PC-9 (cell line): ENCODE measurements at regions of chr2 and their contacts with region 1.

Region 1: DNA sequence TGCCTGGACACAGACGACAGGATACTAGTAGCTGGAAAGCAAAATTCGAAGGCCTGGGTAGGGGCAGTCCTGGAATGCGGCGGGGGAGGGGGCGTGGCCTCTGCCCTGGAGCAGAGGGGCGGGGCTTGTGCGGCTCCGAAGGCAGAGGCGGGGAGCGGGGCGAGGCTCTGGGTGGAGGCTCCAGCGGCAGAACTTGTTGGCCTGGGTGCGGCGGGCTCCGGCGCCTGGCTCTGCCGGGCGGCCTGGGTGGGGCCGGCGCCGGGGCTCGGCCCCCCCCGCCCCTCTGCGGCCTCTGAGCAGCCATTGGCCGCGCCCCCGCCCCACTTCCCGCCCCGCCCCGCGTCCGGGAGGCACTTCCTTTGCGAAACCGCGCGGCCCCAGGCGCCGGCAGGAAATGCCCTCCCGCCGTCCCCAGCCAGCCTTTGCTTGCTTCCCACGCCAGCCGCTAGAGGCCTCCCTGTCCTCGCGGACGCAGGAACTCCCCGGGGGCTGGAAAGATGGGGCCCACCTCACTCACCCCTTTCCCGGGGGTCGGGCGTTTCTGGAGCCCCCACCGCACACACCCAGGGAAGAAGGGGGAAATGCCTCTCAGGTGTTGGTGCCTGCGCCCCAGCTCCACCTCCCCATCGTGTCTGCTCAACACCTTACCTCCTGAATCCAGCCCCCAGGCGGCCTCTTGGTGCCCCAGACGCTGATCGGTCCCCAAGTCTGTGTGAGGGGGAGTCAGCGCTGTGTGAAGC is 6.7 kb downstream of the CTDSP1 start:
- DNase-seq: peak; percentile 78 to 97
- H3K4me3 ChIP-seq: peak overlapping the region; percentile 63; the same call in 1 of the 2 replicates
- H3K27ac ChIP-seq: peak overlapping the region; percentile 58
- H3K4me1 ChIP-seq: peaks cover 17% of the 10 kb centered on the region
- H3K27me3 ChIP-seq: no peaks in the 10 kb centered on the region
- CTCF ChIP-seq: peak; percentile 76

Region 2: DNA sequence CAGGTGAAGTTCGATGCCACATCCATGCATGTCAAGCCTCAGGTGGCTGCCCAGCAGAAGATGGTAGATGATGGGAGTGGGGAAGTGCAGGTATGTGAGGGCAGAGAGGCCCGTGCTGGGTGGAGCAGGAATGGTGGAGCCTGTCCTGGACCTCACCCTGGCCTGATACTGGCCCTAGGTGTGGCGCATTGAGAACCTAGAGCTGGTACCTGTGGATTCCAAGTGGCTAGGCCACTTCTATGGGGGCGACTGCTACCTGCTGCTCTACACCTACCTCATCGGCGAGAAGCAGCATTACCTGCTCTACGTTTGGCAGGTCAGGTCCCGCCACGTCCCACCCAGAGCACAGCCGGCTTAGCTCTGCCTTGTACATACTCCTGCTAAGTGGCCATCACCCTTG is 25.5 kb after region 1 on chr2:
- CTCF ChIA-PET with region 1: interaction called, 12 read pairs
- POLR2A ChIA-PET with region 1: no interaction called
- intact Hi-C with region 1: no loop called
- DNase-seq: no peak
- H3K4me3 ChIP-seq: no peak overlapping the region
- H3K27ac ChIP-seq: no peak overlapping the region
- H3K4me1 ChIP-seq: no peaks in the 10 kb centered on the region
- H3K27me3 ChIP-seq: 0 out of 2 replicates have a peak, but pooled peaks cover 5% of the 10 kb centered on the region
- CTCF ChIP-seq: no peak

Region 3: DNA sequence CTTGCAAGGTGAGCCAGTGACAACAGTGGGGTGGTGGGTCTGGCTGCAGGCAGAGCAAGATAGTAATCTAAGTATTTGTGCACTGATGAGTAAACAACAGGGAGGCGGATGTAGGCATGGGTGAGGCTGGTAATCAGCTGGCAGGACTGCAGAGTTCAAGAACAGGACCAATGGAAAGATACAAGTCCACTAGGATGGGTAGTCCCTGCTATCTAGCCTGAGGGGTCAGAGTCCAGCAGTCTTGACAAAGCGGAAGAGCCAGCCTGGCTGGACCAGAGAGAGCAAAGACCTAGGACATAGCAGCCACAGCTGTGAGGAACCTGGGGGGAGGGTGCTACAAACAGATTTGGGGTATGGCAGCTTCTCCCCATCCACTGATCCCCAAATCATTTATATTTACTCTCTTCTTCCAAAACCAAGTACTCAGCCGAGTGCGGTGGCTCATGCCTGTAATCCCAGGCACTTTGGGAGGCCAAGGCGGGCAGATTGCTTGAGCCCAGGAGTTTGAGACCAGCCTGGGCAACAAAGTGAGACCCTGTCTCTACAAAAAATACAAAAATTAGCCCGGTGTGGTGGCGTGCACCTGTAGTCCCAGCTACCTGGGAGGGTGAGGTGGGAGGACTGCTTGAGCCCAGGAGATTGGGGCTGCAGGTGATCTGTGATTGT is 38.4 kb after region 1 on chr2:
- CTCF ChIA-PET with region 1: no interaction called
- POLR2A ChIA-PET with region 1: interaction called, 4 read pairs
- intact Hi-C with region 1: loop called (anchors 2 kb)
- DNase-seq: peak; percentile 66 to 88
- H3K4me3 ChIP-seq: no peak overlapping the region
- H3K27ac ChIP-seq: no peak overlapping the region
- H3K4me1 ChIP-seq: peaks cover 50% of the 10 kb centered on the region
- H3K27me3 ChIP-seq: no peaks in the 10 kb centered on the region
- CTCF ChIP-seq: no peak

Region 4: GRCh38 chr2:218466016-218466521 is 59.7 kb after region 1 on chr2:
- CTCF ChIA-PET with region 1: interaction called, 4 read pairs
- POLR2A ChIA-PET with region 1: no interaction called
- intact Hi-C with region 1: loop called (anchors 1 kb)
- DNase-seq: no peak
- H3K4me3 ChIP-seq: no peak overlapping the region
- H3K27ac ChIP-seq: no peak overlapping the region
- H3K4me1 ChIP-seq: no peaks in the 10 kb centered on the region
- H3K27me3 ChIP-seq: no peaks in the 10 kb centered on the region
- CTCF ChIP-seq: peak; percentile 77

Region 5: DNA sequence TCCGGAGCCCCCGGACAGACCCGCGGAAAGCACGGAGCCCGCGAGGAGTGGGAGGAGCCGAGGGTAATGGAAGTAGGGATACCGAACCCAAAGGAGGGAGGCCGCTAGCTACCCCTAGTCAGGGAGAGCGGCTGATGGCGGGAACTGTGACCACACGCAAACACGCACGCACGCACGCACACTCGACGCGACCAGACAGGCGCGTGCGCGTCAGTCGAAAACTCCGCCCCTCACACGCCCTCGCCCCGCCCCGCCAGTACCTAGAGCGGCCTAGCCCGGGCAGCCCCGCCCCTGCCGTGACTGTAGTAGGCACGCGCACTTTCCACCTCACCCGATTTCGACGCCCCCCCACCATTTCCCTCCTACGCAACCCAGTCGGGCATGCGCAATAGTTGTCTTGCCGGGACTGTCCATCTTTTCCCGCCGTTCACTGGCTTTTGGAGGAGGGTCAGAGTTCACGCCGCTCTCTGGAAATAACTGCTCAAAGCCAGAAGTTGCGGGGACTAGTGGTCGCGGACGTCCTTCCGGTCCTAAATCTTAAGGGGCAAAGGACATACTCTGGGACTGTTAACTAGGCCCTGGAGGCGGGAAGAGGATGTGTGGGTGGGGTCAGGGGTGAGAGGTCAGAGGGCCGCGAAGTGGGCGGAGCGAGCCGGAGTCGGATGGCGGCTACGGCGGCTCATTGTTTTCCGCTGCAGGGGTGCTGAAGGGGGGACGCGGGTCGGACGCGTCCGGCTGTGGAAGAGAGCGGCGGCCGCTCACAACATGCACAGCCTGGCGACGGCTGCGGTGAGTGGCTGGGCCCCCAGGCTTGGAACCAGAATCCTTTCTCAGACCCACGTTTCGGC is 162.0 kb after region 1 on chr2 and contains the starts of genes CNOT9 and USP37:
- CTCF ChIA-PET with region 1: no interaction called
- POLR2A ChIA-PET with region 1: no interaction called
- intact Hi-C with region 1: loop called (anchors 1 kb)
- DNase-seq: peak; percentile 91 to 99
- H3K4me3 ChIP-seq: peak within 1 kb of the TSS; percentile 90
- H3K27ac ChIP-seq: peak within 1 kb of the TSS; percentile 81
- H3K4me1 ChIP-seq: peaks cover 29% of the 10 kb centered on the region
- H3K27me3 ChIP-seq: no peaks in the 10 kb centered on the region
- CTCF ChIP-seq: no peak
- total RNA-seq, gene CNOT9: 45.8 and 46.0 TPM in 2 replicates
- total RNA-seq, gene USP37: 13.1 and 15.4 TPM in 2 replicates

Region 6: DNA sequence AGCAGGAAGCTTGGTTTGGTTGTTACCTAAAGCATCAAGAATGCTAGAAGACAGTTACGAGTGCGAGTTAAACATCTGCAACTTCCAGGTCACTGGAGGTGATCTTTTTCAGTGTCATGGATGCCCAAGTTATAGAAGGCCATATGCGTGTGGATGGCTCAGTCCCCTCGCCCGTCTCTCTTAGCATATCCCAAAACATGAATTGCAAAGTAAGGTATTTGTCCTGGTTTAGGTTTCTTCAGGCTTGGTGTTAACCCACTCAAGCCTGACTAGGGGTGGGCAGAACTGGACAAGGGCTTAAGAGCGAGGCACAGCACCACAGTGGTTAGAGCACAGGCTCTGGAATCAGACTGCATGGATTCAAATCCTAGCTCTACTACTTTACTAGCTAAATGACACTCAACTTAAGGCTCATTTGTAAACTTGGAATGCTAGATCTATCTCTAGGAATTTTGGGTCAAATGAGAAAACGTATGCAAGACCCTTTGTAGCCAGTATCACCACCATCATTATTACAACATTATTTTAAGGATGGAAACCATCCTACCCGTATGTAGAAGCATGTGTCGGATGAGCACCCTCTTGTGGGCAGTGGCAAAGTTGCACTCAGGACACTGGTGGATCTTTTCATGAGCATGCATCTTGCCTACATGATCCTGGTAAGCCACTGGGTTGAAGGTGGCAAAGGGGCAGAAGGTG is 241.9 kb after region 1 on chr2:
- CTCF ChIA-PET with region 1: no interaction called
- POLR2A ChIA-PET with region 1: no interaction called
- intact Hi-C with region 1: loop called (anchors 1 kb)
- DNase-seq: peak; percentile 46 to 54
- H3K4me3 ChIP-seq: no peak overlapping the region
- H3K27ac ChIP-seq: no peak overlapping the region
- H3K4me1 ChIP-seq: peaks cover 12% of the 10 kb centered on the region; the same call in 1 of the 2 replicates
- H3K27me3 ChIP-seq: no peaks in the 10 kb centered on the region
- CTCF ChIP-seq: peak; percentile 87